ENCODE measurements at regions of chrX and their contacts with region 1.

Region 1: GRCh38 chrX:8139716-8140115 is 31.4 kb downstream of the VCX2 start:
- DNase-seq: no peak
- H3K4me3 ChIP-seq: no peak overlapping the region
- CTCF ChIP-seq: no peak
- POLR2A ChIP-seq: no peak

Region 2: GRCh38 chrX:8201896-8202331 is 62.2 kb after region 1 on chrX:
- intact Hi-C with region 1: no loop called
- DNase-seq: no peak
- H3K4me3 ChIP-seq: no peak overlapping the region
- CTCF ChIP-seq: no peak
- POLR2A ChIP-seq: no peak

Region 3: GRCh38 chrX:9501362-9501761 is 1361.6 kb after region 1 on chrX:
- intact Hi-C with region 1: loop called (anchors 5 kb)
- DNase-seq: no peak
- H3K4me3 ChIP-seq: no peak overlapping the region
- CTCF ChIP-seq: no peak
- POLR2A ChIP-seq: no peak